ENCODE measurements at regions of chr11 and their contacts with region 1.

Region 1: DNA sequence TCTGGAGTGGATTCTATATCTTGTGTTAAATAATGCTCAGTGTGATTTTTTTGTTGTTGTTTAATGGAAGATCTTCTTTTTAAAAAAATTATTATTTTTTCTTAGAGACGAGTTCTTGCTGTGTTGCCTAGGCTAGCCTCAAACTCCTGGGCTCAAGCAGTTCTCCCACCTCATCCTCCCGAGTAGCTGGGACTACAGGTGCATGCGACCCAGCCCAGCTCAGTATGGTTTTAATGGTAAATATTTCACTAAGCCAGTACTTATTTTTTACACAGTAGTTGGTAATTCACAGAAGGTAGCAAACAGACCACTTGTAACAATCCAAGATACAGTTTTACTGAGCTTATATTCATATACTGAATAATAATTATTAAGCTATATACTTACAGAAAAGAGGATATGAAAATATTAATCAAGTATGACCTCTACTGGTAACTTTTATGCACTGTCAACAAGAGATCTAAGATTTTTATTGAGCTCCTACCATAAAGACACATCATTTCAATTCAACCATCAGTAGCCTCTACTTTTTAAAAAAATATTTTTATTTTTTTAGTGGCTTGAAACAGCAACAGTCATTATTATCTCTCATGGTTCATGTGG is 6.1 kb upstream of the CD59 start:
- DNase-seq: peak; percentile 62
- H3K4me3 ChIP-seq: no peak overlapping the region
- H3K27ac ChIP-seq: no peak overlapping the region
- H3K4me1 ChIP-seq: peaks cover 9% of the 10 kb centered on the region
- H3K27me3 ChIP-seq: no peaks in the 10 kb centered on the region
- CTCF ChIP-seq: peak; percentile 22 to 27
- POLR2A ChIP-seq: no peak

Region 2: GRCh38 chr11:33376331-33377310 is 365.7 kb before region 1 on chr11:
- CTCF ChIA-PET with region 1: interaction called, 26 read pairs
- POLR2A ChIA-PET with region 1: no interaction called
- dilution Hi-C with region 1: no loop called
- intact Hi-C with region 1: loop called (anchors 5 kb)
- DNase-seq: peak; percentile 25
- H3K4me3 ChIP-seq: peak overlapping the region; percentile 68 to 84 (median 79)
- H3K27ac ChIP-seq: peak overlapping the region; percentile 70
- H3K4me1 ChIP-seq: peaks cover 45% of the 10 kb centered on the region
- H3K27me3 ChIP-seq: no peaks in the 10 kb centered on the region
- CTCF ChIP-seq: no peak
- POLR2A ChIP-seq: no peak

Region 3: DNA sequence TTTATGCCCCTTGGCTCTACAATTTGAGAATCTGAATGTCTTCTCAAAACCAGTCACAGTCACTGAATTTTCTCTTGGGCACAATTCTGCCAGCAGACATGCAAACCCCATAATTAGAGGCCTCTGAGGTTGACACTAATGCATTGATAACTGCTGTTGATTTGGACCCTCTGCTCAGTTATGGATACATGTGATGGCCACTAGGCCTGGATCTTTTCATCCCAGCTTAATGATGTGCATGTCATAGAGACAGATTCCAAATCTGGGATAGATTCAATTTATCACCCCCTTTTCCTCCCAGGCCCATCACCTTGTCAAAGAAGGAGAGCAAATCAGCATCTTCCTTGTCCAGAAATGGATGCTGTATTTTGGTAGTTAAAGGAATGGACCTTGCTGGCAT is 134.0 kb before region 1 on chr11:
- CTCF ChIA-PET with region 1: no interaction called
- POLR2A ChIA-PET with region 1: no interaction called
- dilution Hi-C with region 1: no loop called
- intact Hi-C with region 1: no loop called
- DNase-seq: no peak
- H3K4me3 ChIP-seq: no peak overlapping the region
- H3K27ac ChIP-seq: no peak overlapping the region
- H3K4me1 ChIP-seq: no peaks in the 10 kb centered on the region
- H3K27me3 ChIP-seq: no peaks in the 10 kb centered on the region
- CTCF ChIP-seq: no peak
- POLR2A ChIP-seq: no peak

Region 4: GRCh38 chr11:33682446-33682845 is 59.9 kb before region 1 on chr11:
- CTCF ChIA-PET with region 1: interaction called, 171 read pairs
- POLR2A ChIA-PET with region 1: no interaction called
- dilution Hi-C with region 1: no loop called
- intact Hi-C with region 1: no loop called
- DNase-seq: no peak
- H3K4me3 ChIP-seq: no peak overlapping the region
- H3K27ac ChIP-seq: no peak overlapping the region
- H3K4me1 ChIP-seq: no peaks in the 10 kb centered on the region
- H3K27me3 ChIP-seq: no peaks in the 10 kb centered on the region
- CTCF ChIP-seq: no peak
- POLR2A ChIP-seq: no peak

Region 5: GRCh38 chr11:33706546-33706945 is 35.8 kb before region 1 on chr11:
- CTCF ChIA-PET with region 1: interaction called, 254 read pairs
- POLR2A ChIA-PET with region 1: interaction called, 8 read pairs
- dilution Hi-C with region 1: no loop called
- intact Hi-C with region 1: no loop called
- DNase-seq: peak; percentile 69
- H3K4me3 ChIP-seq: no peak overlapping the region
- H3K27ac ChIP-seq: peak overlapping the region; percentile 54
- H3K4me1 ChIP-seq: peaks cover 83% of the 10 kb centered on the region
- H3K27me3 ChIP-seq: no peaks in the 10 kb centered on the region
- CTCF ChIP-seq: no peak
- POLR2A ChIP-seq: no peak

Region 6: GRCh38 chr11:33753304-33753967 is 11.1 kb after region 1 on chr11:
- CTCF ChIA-PET with region 1: interaction called, 30 read pairs
- POLR2A ChIA-PET with region 1: no interaction called
- dilution Hi-C with region 1: no loop called
- intact Hi-C with region 1: no loop called
- DNase-seq: peak; percentile 59
- H3K4me3 ChIP-seq: no peak overlapping the region
- H3K27ac ChIP-seq: no peak overlapping the region
- H3K4me1 ChIP-seq: no peaks in the 10 kb centered on the region
- H3K27me3 ChIP-seq: no peaks in the 10 kb centered on the region
- CTCF ChIP-seq: no peak
- POLR2A ChIP-seq: no peak

Measured in endothelial cell of umbilical vein (primary cell).